H1 (cell line): ENCODE measurements at regions of chr17 and their contacts with region 1.

Region 1: DNA sequence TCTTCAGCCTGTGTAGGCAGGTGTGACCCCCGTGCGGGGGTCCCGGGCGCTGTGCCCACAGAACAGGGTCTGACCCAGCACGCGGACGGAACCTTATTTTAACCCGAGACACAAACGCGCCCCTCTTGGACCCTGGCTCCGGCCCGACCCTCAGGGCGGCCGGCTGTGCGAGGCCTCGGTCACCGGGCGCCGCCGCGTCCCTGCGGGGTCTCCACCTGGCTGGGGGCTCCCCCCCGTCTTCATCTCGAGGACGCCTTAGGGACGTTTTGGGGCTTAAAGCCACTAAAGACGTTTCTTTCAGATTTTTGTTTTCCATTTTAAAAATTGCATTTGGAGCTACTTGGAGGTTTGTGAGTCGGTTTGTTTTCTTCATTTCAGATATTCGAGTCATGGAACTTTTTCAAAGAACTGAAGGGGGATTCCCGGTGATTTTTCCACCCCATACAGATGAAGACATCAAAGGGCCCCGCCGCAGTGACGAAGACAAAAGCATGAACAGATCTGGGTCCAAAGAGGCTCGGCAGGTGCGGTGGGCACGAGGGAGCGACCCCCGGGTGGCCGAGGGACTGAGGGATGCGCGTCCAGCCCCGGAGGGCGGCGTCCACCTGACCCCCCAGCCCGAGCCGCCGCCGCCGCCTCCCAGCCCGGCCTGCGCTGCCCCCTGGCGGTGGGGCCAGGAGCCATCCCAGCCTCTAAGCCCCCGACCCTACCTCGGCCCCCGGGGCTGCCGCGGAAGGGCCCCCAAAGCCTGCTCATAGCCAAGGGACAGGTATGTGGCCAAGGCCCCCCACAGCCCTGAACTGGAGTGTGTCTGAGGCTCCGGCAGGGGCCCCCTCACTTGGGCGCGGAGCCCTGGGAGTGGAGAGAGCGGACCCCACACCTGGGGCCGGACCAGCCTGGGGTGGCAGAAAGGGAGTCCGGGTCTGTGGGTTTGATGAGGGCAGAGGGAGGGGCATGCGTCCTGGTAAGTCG is 3.8 kb upstream of the CD7 start:
- DNase-seq: peak in 1 of 2 experiments; percentile 89
- H3K4me3 ChIP-seq: 0 out of 8 replicates have a peak overlapping the region, but pooled peaks of 1 of the 4 experiments have one; percentile 27
- H3K27ac ChIP-seq: no peak overlapping the region
- H3K4me1 ChIP-seq: no peaks in the 10 kb centered on the region; a peak in 4 of 7 replicates
- H3K27me3 ChIP-seq: no peaks in the 10 kb centered on the region; a peak in 2 of 7 replicates
- CTCF ChIP-seq: peak; percentile 72 to 89 (median 75)
- EP300 ChIP-seq: peak in 1 of 2 experiments; percentile 58; a peak in 1 of 3 replicates
- POLR2A ChIP-seq: no peak
- RAD21 ChIP-seq: peak; percentile 65 to 80

Region 2: DNA sequence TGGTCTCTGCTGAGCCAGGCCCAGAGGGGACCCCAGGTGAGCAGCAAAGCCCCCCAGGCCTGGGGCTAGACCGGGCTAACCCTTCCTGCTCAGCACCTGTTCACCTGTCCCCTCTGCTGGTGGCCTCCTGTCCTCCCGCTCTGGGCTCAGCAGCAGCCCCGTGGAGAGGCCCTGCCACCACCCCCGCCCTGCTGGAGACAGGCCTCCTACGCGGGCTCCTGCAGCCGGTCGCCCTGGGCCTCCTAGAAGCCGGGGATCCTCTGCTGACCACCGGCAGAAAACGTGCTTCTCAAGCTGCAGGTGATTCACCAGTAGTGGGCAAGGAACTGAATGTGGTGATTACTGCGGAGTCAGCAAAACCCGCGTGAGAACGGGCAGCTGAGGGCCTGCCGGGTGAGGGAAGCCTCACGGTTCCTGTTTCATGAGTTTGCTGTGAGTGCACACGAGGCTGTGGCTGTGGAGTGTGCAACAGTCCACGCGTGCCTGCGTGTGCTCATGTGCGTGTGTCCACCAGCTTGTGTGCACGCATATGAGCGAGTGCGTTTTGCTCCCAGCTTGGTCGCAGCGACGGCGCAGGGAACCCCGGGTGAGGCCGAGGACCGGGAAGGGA is 11.5 kb after region 1 on chr17:
- CTCF ChIA-PET with region 1: interaction called, 10 read pairs
- POLR2A ChIA-PET with region 1: interaction called, 3 read pairs
- DNase-seq: no peak
- H3K4me3 ChIP-seq: peak overlapping the region; percentile 7 to 58 (median 32); a peak in 6 of 8 replicates
- H3K27ac ChIP-seq: no peak overlapping the region
- H3K4me1 ChIP-seq: peaks cover 0 to 25% (median 17%) of the 10 kb centered on the region in 4 experiments; a peak in 6 of 7 replicates
- H3K27me3 ChIP-seq: peaks cover 28 to 56% (median 53%) of the 10 kb centered on the region in 4 experiments
- CTCF ChIP-seq: no peak
- EP300 ChIP-seq: no peak
- POLR2A ChIP-seq: no peak
- RAD21 ChIP-seq: no peak